ENCODE measurements at regions of chr12 and their contacts with region 1.

Region 1: DNA sequence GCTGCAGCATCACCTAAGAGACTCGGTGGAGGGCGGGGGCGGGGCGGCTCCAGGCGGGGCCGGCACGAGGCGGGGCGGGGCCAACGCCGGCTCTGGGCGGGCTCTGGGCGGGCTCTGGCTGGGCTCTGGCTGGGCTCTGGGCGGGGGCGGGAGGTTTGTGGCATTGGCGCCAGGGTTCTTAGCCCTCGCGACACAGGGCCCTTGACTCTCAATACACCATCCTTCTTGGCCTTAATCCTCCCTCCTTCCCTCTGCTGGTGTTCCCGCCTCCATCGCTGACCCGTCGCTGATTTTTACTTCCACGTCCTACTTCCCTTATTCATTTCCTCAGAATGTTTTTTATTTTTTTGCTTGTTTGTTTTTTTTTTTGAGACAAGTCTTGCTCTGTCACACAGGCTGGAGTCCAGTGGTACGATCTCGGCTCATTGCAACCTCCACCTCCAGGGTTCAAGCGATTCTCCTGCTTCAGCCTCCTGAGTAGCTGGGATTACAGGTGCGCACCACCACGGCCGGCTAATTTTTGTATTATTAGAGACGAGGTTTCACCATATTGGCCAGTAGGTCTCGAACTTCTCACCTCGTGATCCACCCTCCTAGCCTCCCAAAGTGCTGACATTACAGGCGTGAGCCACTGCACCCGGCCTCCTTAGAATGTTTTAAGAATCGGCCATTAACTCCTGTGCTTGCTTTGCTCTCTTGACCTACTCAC is at the start of gene BLTP3B:
- DNase-seq: peak; percentile 93
- ATAC-seq: peak; percentile 81
- H3K4me3 Mint-ChIP-seq: peak within 1 kb of the TSS; percentile 94
- H3K27ac Mint-ChIP-seq: peak within 1 kb of the TSS; percentile 97
- H3K4me1 Mint-ChIP-seq: peaks cover 36% of the 10 kb centered on the region
- H3K27me3 Mint-ChIP-seq: no peaks in the 10 kb centered on the region
- total RNA-seq, gene BLTP3B: 36.4 to 42.0 TPM

Region 2: GRCh38 chr12:99959547-99960180 is 183.3 kb before region 1 on chr12:
- CTCF ChIA-PET with region 1: no interaction called
- DNase-seq: no peak
- ATAC-seq: no peak
- H3K4me3 Mint-ChIP-seq: no peak overlapping the region
- H3K27ac Mint-ChIP-seq: no peak overlapping the region
- H3K4me1 Mint-ChIP-seq: no peaks in the 10 kb centered on the region
- H3K27me3 Mint-ChIP-seq: no peaks in the 10 kb centered on the region

Region 3: DNA sequence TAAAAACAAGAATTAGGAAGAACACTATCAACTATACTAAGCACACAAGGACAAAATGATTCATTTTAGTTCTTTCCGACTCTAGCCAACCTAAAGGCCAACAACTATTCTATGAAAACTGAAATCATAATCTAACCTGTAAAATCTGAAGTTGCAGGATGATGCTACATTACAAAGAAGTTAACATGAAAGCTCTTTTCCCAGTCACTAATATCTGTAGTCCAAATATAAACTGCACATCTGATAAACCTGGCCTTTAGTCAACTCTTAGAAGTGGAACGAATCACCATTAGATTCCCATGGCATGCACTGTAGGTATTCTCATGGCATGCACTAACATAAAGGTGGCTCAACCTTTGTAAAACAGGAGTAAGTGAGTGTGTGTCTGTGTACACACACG is 42.0 kb before region 1 on chr12:
- CTCF ChIA-PET with region 1: no interaction called
- DNase-seq: no peak
- ATAC-seq: peak; percentile 27
- H3K4me3 Mint-ChIP-seq: no peak overlapping the region
- H3K27ac Mint-ChIP-seq: peak overlapping the region; percentile 21
- H3K4me1 Mint-ChIP-seq: peaks cover 4% of the 10 kb centered on the region
- H3K27me3 Mint-ChIP-seq: no peaks in the 10 kb centered on the region

Region 4: GRCh38 chr12:100154474-100155247 is 11.7 kb after region 1 on chr12:
- CTCF ChIA-PET with region 1: interaction called, 27 read pairs
- DNase-seq: peak; percentile 82
- ATAC-seq: peak; percentile 79
- H3K4me3 Mint-ChIP-seq: no peak overlapping the region
- H3K27ac Mint-ChIP-seq: no peak overlapping the region
- H3K4me1 Mint-ChIP-seq: peaks cover 11% of the 10 kb centered on the region
- H3K27me3 Mint-ChIP-seq: no peaks in the 10 kb centered on the region